Left ventricle myocardium inferior (tissue), 1 donor: ENCODE measurements at regions of chr17 and their contacts with region 1.

Region 1: DNA sequence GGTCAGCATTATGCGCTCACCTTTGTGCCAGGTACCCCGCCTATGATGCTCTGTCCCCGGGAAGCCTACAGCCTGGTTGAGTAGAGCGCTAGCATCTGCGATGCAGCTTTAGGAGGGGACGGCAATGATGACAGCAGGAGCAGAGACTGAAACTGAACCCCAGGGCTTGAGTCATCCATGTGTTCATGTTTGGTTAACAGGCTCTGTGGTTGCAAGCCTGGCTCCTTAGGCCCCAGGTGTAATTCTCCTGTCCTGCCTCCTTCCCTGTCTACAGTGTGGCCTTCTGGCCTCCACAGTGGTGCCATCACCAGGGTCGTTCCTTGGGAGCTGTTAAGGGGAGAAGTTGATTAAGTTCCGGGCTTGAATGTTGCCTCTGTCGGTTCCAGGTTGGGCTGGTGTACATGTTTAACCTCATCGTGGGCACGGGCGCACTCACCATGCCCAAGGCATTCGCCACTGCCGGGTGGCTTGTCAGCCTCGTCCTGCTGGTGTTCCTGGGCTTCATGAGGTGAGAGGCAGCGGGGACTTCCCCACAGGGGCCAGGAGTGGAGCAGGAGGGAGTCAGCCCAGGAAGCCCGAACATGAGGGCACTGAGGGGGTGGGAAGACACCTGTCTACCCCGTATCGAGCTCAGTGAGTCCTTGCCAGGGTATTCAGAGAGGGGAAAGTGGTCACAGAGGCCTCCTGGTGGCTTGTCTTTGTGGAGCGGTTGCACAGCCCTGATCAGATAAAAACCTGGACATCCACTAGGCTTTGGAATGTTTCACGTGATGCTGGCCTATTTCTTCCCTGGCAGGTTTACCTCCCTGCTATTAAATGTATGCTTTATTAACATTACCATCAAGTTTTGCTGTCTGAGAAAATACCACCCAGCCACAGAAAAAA is 9.2 kb upstream of the NAT9 start:
- DNase-seq: no peak
- H3K4me3 ChIP-seq: no peak overlapping the region
- H3K27ac ChIP-seq: no peak overlapping the region
- H3K4me1 ChIP-seq: peaks cover 5% of the 10 kb centered on the region
- H3K27me3 ChIP-seq: no peaks in the 10 kb centered on the region
- CTCF ChIP-seq: no peak

Region 2: DNA sequence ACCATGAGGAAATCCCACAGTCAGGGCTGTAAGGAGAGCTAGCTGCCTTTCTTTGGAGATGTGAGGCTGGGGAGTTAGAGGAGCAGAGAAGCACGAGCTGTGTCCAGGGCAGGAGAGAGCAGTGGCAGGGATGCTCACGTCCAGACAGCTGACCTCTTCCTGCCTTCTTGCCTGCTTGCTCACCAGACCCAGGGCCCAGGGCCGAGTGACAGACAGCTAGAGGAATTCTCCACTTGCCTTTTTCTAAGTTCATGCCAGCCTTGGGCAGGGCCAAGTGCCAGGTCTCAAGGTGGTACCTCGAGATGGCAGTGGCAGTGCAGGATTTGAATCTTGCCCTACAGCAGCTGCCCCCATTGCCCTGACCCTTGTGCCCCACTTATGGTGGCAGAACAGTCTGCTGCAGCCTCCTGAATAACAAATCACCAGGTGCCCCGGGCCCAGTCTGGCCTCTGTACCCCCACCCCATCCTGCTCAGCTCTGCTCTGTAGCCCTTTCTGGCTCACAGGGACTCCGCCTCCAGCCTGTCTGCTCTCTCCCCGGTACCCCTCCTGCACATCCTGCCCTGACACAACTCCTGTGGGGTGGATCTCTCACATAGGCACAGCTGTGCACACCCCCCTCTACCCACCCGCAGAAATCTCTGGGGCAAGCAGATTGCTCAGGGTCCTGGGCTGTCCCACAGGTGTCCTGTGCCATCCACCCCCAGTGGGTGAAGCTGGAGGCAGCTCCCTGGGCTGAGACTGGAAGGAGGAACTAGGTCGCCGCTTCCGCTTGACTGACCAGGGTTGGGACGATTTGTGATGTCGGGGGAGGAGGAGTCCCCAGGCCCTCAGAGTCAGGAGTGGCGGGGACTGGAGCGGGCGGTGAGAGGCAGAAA is 48.4 kb after region 1 on chr17:
- intact Hi-C with region 1: loop called (anchors 5 kb)
- DNase-seq: no peak
- H3K4me3 ChIP-seq: no peak overlapping the region
- H3K27ac ChIP-seq: no peak overlapping the region
- H3K4me1 ChIP-seq: no peaks in the 10 kb centered on the region
- H3K27me3 ChIP-seq: no peaks in the 10 kb centered on the region
- CTCF ChIP-seq: no peak

Region 3: GRCh38 chr17:74864866-74865395 is 79.6 kb after region 1 on chr17:
- intact Hi-C with region 1: loop called (anchors 5 kb)
- DNase-seq: peak; percentile 75
- H3K4me3 ChIP-seq: no peak overlapping the region
- H3K27ac ChIP-seq: no peak overlapping the region
- H3K4me1 ChIP-seq: peaks cover 24% of the 10 kb centered on the region
- H3K27me3 ChIP-seq: peaks cover 20% of the 10 kb centered on the region
- CTCF ChIP-seq: peak; percentile 96